ENCODE measurements at regions of chr1 and their contacts with region 1.

Region 1: GRCh38 chr1:170881268-170882265 is 53.8 kb upstream of the MROH9 start:
- DNase-seq: peak; percentile 37
- ATAC-seq: peak; percentile 89
- H3K4me3 ChIP-seq: no peak overlapping the region
- H3K27ac ChIP-seq: no peak overlapping the region
- H3K4me1 ChIP-seq: no peaks in the 10 kb centered on the region
- H3K27me3 ChIP-seq: no peaks in the 10 kb centered on the region
- CTCF ChIP-seq: peak; percentile 41 to 90 (median 68)
- POLR2A ChIP-seq: no peak
- RAD21 ChIP-seq: peak; percentile 88

Region 2: GRCh38 chr1:169601093-169601881 is 1280.3 kb before region 1 on chr1:
- CTCF ChIA-PET with region 1: no interaction called
- POLR2A ChIA-PET with region 1: no interaction called
- RAD21 ChIA-PET with region 1: no interaction called
- intact Hi-C with region 1: loop called (anchors 5 kb)
- DNase-seq: no peak
- ATAC-seq: peak; percentile 67
- H3K4me3 ChIP-seq: no peak overlapping the region
- H3K27ac ChIP-seq: no peak overlapping the region
- H3K4me1 ChIP-seq: no peaks in the 10 kb centered on the region
- H3K27me3 ChIP-seq: peaks cover 5% of the 10 kb centered on the region; the same call in 1 of the 2 replicates
- CTCF ChIP-seq: peak; percentile 25 to 59 (median 50); a peak in 4 of 6 replicates
- POLR2A ChIP-seq: no peak
- RAD21 ChIP-seq: peak; percentile 73

Region 3: DNA sequence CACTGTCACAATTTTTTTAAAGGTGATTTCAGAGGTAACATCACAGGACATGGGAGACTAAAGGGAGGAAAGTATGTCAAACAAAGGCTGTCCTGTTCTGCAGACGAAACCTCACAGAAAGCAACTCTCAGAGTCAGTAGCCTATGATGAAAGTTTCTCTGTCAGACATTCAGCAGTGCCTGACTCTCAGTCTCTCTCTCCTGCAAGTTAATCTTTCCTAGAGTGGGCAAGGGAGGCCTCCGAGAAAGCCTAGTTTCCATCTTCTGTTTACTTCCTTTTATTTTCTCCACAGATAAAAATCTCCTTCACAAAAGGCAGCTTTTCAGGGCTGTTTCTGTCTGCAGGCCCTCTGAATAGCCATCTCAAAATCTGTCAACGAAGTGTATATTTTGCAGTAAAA is 278.6 kb after region 1 on chr1:
- CTCF ChIA-PET with region 1: no interaction called
- POLR2A ChIA-PET with region 1: no interaction called
- RAD21 ChIA-PET with region 1: no interaction called
- intact Hi-C with region 1: no loop called
- DNase-seq: no peak
- ATAC-seq: no peak
- H3K4me3 ChIP-seq: no peak overlapping the region
- H3K27ac ChIP-seq: no peak overlapping the region
- H3K4me1 ChIP-seq: no peaks in the 10 kb centered on the region
- H3K27me3 ChIP-seq: no peaks in the 10 kb centered on the region
- CTCF ChIP-seq: no peak
- POLR2A ChIP-seq: no peak
- RAD21 ChIP-seq: no peak